CD8-positive, alpha-beta T cell (primary cell): ENCODE measurements at regions of chr4 and their contacts with region 1.

Region 1: GRCh38 chr4:184168406-184169019 is 49.2 kb downstream of the ENPP6 start:
- DNase-seq: peak; percentile 12 to 64 (median 36)
- ATAC-seq: peak; percentile 44
- H3K4me3 ChIP-seq: no peak overlapping the region
- H3K4me3 Mint-ChIP-seq: no peak overlapping the region
- H3K27ac ChIP-seq: no peak overlapping the region
- H3K27ac Mint-ChIP-seq: no peak overlapping the region
- H3K4me1 ChIP-seq: peaks cover 4% of the 10 kb centered on the region
- H3K4me1 Mint-ChIP-seq: peaks cover 2% of the 10 kb centered on the region
- H3K27me3 ChIP-seq: peaks cover 0 to 7% of the 10 kb centered on the region in 2 experiments
- H3K27me3 Mint-ChIP-seq: peaks cover 63% of the 10 kb centered on the region
- CTCF ChIP-seq: peak; percentile 58

Region 2: DNA sequence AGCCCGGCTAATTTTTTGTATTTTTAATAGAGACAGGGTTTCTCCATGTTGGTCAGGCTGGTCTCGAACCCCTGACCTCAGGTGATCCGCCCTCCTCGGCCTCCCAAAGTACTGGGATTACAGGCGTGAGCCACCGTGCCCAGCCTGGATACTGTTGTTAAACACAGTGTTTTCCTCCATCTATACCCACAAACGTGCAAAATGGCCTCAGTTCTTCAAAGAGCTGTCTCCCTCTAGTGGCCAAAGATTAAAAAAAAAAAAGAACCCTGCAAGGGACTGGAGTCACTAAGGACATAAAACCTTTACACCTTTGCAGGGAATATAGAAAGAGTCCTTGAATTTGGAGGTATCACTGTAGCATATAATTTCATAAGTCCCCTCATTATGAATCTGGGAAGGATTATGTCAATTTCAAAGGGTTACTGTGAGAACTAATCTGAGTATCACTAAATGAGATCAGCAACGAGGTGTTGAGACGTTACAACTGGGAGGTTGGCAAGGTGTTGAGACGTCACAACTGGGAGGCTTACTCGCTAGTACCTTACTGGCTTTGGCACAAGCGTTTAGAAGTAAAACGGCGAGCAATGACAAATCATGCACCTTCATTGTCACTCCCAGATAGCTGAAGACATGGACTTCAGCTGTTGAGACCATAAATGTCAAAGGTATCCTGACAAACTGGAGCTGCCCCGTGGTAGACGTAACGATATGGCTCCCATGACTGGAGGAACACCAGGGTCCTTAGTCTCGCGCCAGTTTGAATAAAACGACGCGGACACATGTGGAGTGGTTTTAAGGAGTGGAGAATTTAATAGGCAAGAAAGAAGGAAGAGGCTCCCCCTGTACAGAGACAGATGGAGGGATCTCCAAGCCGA is 82.5 kb after region 1 on chr4:
- CTCF ChIA-PET with region 1: interaction called, 5 read pairs
- POLR2A ChIA-PET with region 1: no interaction called
- intact Hi-C with region 1: loop called (anchors 5 kb)
- DNase-seq: peak in 3 of 9 experiments; percentile 48 to 75 (median 67)
- ATAC-seq: peak; percentile 79
- H3K4me3 ChIP-seq: no peak overlapping the region
- H3K4me3 Mint-ChIP-seq: no peak overlapping the region
- H3K27ac ChIP-seq: no peak overlapping the region
- H3K27ac Mint-ChIP-seq: no peak overlapping the region
- H3K4me1 ChIP-seq: no peaks in the 10 kb centered on the region
- H3K4me1 Mint-ChIP-seq: peaks cover 2% of the 10 kb centered on the region
- H3K27me3 ChIP-seq: no peaks in the 10 kb centered on the region
- H3K27me3 Mint-ChIP-seq: peaks cover 6% of the 10 kb centered on the region
- CTCF ChIP-seq: peak; percentile 79

Region 3: GRCh38 chr4:185445209-185445608 is 1276.7 kb after region 1 on chr4:
- CTCF ChIA-PET with region 1: no interaction called
- POLR2A ChIA-PET with region 1: no interaction called
- intact Hi-C with region 1: no loop called
- DNase-seq: no peak
- ATAC-seq: no peak
- H3K4me3 ChIP-seq: no peak overlapping the region
- H3K4me3 Mint-ChIP-seq: no peak overlapping the region
- H3K27ac ChIP-seq: no peak overlapping the region
- H3K27ac Mint-ChIP-seq: no peak overlapping the region
- H3K4me1 ChIP-seq: no peaks in the 10 kb centered on the region
- H3K4me1 Mint-ChIP-seq: no peaks in the 10 kb centered on the region
- H3K27me3 ChIP-seq: no peaks in the 10 kb centered on the region
- H3K27me3 Mint-ChIP-seq: peaks cover 10% of the 10 kb centered on the region
- CTCF ChIP-seq: no peak